GM12878 (cell line): ENCODE measurements at regions of chr17 and their contacts with region 1.

Region 1: GRCh38 chr17:42536048-42536371 is at the start of gene NAGLU:
- DNase-seq: peak; percentile 72
- ATAC-seq: peak; percentile 91
- H3K4me3 ChIP-seq: peak within 1 kb of the TSS; percentile 77
- H3K27ac ChIP-seq: peak within 1 kb of the TSS; percentile 75
- H3K4me1 ChIP-seq: peaks cover 19% of the 10 kb centered on the region
- H3K27me3 ChIP-seq: no peaks in the 10 kb centered on the region
- CTCF ChIP-seq: no peak
- EP300 ChIP-seq: 0 out of 4 replicates have a peak, but pooled peaks of 1 of the 2 experiments have one; percentile 59
- POLR2A ChIP-seq: peak; percentile 73
- RAD21 ChIP-seq: no peak
- polyA plus RNA-seq, gene NAGLU: 0.23 to 0.69 TPM

Region 2: GRCh38 chr17:42548070-42548837 is 12.2 kb after region 1 on chr17:
- CTCF ChIA-PET with region 1: interaction called, 21 read pairs
- POLR2A ChIA-PET with region 1: interaction called, 11 read pairs
- RAD21 ChIA-PET with region 1: interaction called, 5 read pairs
- SMC1A ChIA-PET with region 1: interaction called, 11 read pairs
- in situ Hi-C with region 1: no loop called
- intact Hi-C with region 1: no loop called
- DNase-seq: no peak
- ATAC-seq: peak; percentile 96
- H3K4me3 ChIP-seq: peak overlapping the region; percentile 58
- H3K27ac ChIP-seq: no peak overlapping the region
- H3K4me1 ChIP-seq: peaks cover 11% of the 10 kb centered on the region
- H3K27me3 ChIP-seq: no peaks in the 10 kb centered on the region
- CTCF ChIP-seq: peak; percentile 60 to 71 (median 69); a peak in 5 of 6 replicates
- EP300 ChIP-seq: no peak
- POLR2A ChIP-seq: peak; percentile 71; the same call in 1 of the 2 replicates
- RAD21 ChIP-seq: peak; percentile 59

Region 3: GRCh38 chr17:42554250-42555121 is 18.5 kb after region 1 on chr17:
- CTCF ChIA-PET with region 1: interaction called, 7 read pairs
- POLR2A ChIA-PET with region 1: interaction called, 13 read pairs
- RAD21 ChIA-PET with region 1: interaction called, 6 read pairs
- SMC1A ChIA-PET with region 1: interaction called, 11 read pairs
- in situ Hi-C with region 1: no loop called
- intact Hi-C with region 1: no loop called
- DNase-seq: no peak
- ATAC-seq: peak; percentile 94
- H3K4me3 ChIP-seq: peak overlapping the region; percentile 94
- H3K27ac ChIP-seq: peak overlapping the region; percentile 81
- H3K4me1 ChIP-seq: no peaks in the 10 kb centered on the region; the same call in 1 of the 2 replicates
- H3K27me3 ChIP-seq: no peaks in the 10 kb centered on the region
- CTCF ChIP-seq: no peak
- EP300 ChIP-seq: no peak
- POLR2A ChIP-seq: peak; percentile 97
- RAD21 ChIP-seq: no peak